H1 (cell line): ENCODE measurements at regions of chr2 and their contacts with region 1.

Region 1: GRCh38 chr2:196719110-196719872 is 79.8 kb downstream of the CCDC150 start:
- DNase-seq: peak in 1 of 2 experiments; percentile 45
- H3K4me3 ChIP-seq: no peak overlapping the region
- H3K27ac ChIP-seq: no peak overlapping the region
- H3K4me1 ChIP-seq: no peaks in the 10 kb centered on the region
- H3K27me3 ChIP-seq: no peaks in the 10 kb centered on the region
- CTCF ChIP-seq: peak; percentile 23 to 51 (median 35); a peak in 3 of 4 replicates
- EP300 ChIP-seq: no peak
- POLR2A ChIP-seq: no peak
- RAD21 ChIP-seq: peak; percentile 21 to 37; a peak in 3 of 4 replicates

Region 2: GRCh38 chr2:196566961-196567666 is 152.2 kb before region 1 on chr2:
- CTCF ChIA-PET with region 1: no interaction called
- POLR2A ChIA-PET with region 1: no interaction called
- DNase-seq: no peak
- H3K4me3 ChIP-seq: no peak overlapping the region
- H3K27ac ChIP-seq: no peak overlapping the region
- H3K4me1 ChIP-seq: no peaks in the 10 kb centered on the region
- H3K27me3 ChIP-seq: no peaks in the 10 kb centered on the region
- CTCF ChIP-seq: no peak
- EP300 ChIP-seq: no peak
- POLR2A ChIP-seq: no peak
- RAD21 ChIP-seq: no peak

Region 3: DNA sequence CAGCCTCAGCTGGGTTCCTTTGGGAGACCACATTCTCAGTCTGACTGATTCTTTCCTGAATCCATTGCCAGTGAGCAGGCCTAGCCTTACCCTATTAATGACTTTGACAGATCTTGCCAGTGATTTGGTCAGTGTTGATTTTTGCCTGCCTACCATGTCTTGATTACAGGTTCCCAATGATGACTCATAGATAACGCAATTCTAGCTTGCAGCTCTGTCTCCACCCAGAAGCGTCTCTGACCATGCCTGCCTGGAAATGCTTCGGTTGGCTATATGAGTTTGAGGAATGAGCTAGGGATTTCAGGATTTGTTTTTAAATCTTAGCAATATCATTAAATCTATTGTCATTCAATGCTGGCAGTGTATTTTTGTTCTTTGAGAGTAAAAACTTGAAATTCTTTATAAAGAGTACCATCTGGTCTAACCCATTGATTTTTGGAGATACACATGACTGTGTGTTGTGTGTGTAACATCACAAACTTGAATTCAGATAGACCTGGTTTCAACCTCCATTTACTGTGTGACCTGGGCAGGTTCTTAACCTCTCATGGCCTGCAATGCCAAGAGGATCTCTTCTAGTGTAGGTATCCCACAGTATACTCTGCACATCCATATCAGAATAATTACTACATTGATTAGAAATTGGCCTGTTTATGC is 22.7 kb before region 1 on chr2:
- CTCF ChIA-PET with region 1: no interaction called
- POLR2A ChIA-PET with region 1: no interaction called
- DNase-seq: no peak
- H3K4me3 ChIP-seq: no peak overlapping the region
- H3K27ac ChIP-seq: no peak overlapping the region
- H3K4me1 ChIP-seq: no peaks in the 10 kb centered on the region
- H3K27me3 ChIP-seq: no peaks in the 10 kb centered on the region
- CTCF ChIP-seq: no peak
- EP300 ChIP-seq: no peak
- POLR2A ChIP-seq: no peak
- RAD21 ChIP-seq: no peak

Region 4: DNA sequence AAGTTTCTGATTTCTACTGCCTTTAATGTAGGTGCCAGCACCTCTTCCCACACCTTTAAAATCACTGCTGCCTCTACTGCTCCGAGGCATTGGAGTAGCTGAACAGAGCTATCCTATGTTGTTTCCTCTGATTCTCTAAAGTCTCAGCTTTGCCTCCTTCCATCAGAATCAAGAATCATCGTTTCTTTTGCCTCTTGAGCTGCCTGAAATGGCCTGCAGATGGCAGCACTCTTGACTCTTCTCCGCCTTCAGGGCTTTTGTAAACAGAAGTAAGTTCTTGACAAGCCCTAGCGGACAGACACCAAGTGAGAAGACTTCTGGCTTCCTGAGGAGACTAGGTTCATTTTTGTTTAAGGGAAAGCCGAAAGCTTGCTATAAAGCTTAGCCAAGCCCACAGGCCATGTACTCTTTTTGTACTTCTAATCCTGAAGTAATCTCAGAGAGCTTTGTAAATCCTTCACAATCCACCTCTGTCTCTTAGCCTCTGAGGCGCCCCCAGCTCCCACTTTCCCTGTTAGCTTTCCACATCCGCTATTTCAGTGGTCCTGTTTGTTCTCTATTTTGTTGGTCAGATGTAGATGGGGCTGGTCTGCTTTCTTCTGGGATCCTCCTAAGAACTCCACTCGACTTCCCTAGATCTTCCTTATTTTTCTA is 31.8 kb after region 1 on chr2:
- CTCF ChIA-PET with region 1: interaction called, 12 read pairs
- POLR2A ChIA-PET with region 1: no interaction called
- DNase-seq: peak; percentile 33 to 85
- H3K4me3 ChIP-seq: no peak overlapping the region
- H3K27ac ChIP-seq: no peak overlapping the region
- H3K4me1 ChIP-seq: no peaks in the 10 kb centered on the region; a peak in 1 of 7 replicates
- H3K27me3 ChIP-seq: no peaks in the 10 kb centered on the region
- CTCF ChIP-seq: peak; percentile 37 to 95 (median 92)
- EP300 ChIP-seq: no peak
- POLR2A ChIP-seq: no peak
- RAD21 ChIP-seq: peak; percentile 42 to 64; a peak in 3 of 4 replicates